CD14-positive monocyte (primary cell): ENCODE measurements at regions of chr9 and their contacts with region 1.

Region 1: GRCh38 chr9:129258124-129258822 is 80.2 kb upstream of the IER5L start:
- DNase-seq: peak; percentile 85 to 94 (median 89)
- H3K4me3 ChIP-seq: peak overlapping the region in 1 of 3 experiments; percentile 60
- H3K4me3 Mint-ChIP-seq: peak overlapping the region; percentile 57 to 81
- H3K27ac ChIP-seq: no peak overlapping the region
- H3K27ac Mint-ChIP-seq: peak overlapping the region in 3 of 7 donors; percentile 15 to 75 (median 63)
- H3K4me1 ChIP-seq: peaks cover 28 to 31% of the 10 kb centered on the region in 2 donors
- H3K4me1 Mint-ChIP-seq: peaks cover 33% of the 10 kb centered on the region
- H3K27me3 ChIP-seq: peaks cover 9 to 22% of the 10 kb centered on the region in 2 donors
- H3K27me3 Mint-ChIP-seq: peaks cover 27 to 40% (median 27%) of the 10 kb centered on the region in 3 donors
- CTCF ChIP-seq: no peak

Region 2: DNA sequence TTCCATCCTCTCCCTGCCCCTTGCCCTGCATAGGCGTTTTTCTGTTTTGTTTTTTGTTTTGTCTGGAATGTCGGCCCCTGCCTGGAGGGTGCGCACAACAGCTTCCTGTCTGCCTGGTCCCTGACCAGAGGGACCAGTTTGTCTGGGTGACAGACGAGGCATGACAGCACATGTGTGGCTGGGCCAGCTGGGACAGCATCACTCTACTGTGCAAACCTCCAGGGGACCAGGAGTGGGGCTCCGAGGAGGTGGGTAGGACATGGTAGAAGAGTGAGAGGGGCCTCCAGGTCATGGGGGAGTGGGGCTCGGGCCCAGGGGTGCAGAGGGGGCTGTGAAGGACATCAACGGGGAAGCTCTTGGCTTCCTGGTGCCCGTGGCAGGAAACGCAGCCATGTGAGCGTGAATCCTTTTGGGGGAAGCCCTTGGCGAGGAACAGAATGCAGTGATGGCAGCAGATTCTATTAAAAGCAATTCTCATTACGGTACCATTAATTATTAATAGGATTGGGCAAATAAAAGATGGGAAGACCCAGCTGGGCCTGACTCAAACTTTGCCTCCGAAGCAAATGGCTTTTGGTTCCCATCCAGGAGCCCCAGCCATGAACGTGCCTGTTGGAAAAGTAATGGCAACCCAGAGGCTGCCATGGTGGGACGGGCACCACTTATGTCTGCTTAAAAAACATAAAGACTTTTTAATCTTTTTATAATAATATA is 104.2 kb after region 1 on chr9:
- intact Hi-C with region 1: loop called in 1 of 2 experiments (anchors 10 kb)
- DNase-seq: no peak
- H3K4me3 ChIP-seq: no peak overlapping the region
- H3K4me3 Mint-ChIP-seq: no peak overlapping the region
- H3K27ac ChIP-seq: no peak overlapping the region
- H3K27ac Mint-ChIP-seq: no peak overlapping the region
- H3K4me1 ChIP-seq: no peaks in the 10 kb centered on the region
- H3K4me1 Mint-ChIP-seq: peaks cover 6% of the 10 kb centered on the region
- H3K27me3 ChIP-seq: no peaks in the 10 kb centered on the region
- H3K27me3 Mint-ChIP-seq: peaks cover 2 to 4% (median 3%) of the 10 kb centered on the region in 3 donors
- CTCF ChIP-seq: no peak